Spleen (tissue), 13 donors: ENCODE measurements at regions of chrX and their contacts with region 1.

Region 1: DNA sequence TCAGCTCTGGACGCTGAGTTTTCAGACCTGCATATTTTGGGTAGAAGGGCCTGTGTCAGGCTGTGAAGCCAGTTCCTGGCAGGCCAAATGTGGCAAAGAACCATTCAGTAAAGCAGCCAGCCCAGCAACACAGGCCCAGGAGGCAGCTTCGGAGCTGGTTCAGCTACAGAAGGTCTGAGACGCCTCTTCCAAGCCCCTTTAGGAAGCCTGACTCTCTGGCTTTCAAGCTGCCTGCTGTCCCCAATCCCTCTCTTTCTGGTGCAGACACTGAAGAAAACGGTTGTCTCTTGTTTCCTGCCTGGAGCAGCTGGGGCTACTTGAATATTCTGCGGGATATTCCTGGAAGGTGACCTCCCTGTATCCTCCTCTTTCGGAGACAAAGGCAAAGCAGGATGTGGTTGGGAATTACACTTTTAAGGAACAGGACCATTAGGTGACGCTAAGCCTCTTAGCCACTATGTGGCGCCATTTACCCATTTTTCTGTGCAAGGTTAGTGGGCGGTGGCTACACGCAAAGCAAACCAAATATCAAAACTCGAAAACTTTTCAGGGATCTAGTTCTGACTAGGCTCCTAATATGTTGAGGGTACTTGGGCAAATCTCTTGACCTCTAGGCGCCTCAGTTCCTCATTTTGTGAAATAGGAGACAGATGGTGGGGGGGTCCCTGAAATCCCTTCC is 47.2 kb upstream of the LAS1L start:
- DNase-seq: no peak
- H3K4me3 ChIP-seq: no peak overlapping the region
- H3K27ac ChIP-seq: no peak overlapping the region
- H3K4me1 ChIP-seq: peaks cover 0 to 7% (median 3%) of the 10 kb centered on the region in 6 donors
- H3K27me3 ChIP-seq: peaks cover 0 to 13% (median 0%) of the 10 kb centered on the region in 7 donors
- CTCF ChIP-seq: peak; percentile 62 to 89 (median 78)
- POLR2A ChIP-seq: no peak

Region 2: DNA sequence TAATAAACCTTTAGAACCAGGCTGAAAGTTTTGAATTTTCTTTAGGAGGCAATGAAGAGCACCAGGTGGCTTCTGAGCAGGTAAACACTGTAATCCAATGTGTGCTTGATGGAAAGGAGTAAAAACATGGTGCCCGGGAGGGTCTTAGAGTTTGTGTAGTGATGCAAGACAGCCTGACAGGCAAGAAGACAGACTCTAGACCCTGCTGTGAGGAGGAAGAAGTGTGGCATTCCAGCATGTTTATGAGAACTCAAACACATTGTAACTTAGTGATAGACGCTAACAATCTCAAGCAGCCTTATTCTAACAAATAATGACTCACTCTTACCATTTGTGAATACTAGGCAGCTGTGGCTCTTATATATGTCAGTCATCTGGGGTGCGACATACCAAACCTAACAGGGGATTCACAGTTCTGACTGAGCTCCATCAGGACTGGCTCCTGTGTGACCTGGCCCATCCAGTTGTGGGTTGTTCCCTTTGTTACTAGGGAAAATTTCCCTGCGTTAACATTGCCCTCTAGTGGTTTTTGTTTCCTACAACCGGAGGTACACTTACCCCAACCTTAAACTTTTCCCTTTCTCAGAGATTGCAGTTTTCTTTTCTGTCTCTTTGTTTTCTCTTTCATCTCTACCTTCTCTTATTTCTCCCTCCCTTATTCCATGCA is 404.3 kb after region 1 on chrX:
- intact Hi-C with region 1: loop called (anchors 5 kb)
- DNase-seq: peak; percentile 56
- H3K4me3 ChIP-seq: peak overlapping the region in 1 of 8 donors; percentile 8
- H3K27ac ChIP-seq: peak overlapping the region in 5 of 8 donors; percentile 39 to 80 (median 59)
- H3K4me1 ChIP-seq: peaks cover 0 to 25% (median 9%) of the 10 kb centered on the region in 6 donors
- H3K27me3 ChIP-seq: no peaks in the 10 kb centered on the region
- CTCF ChIP-seq: peak; percentile 27 to 73 (median 67)
- POLR2A ChIP-seq: no peak

Region 3: GRCh38 chrX:66046612-66047235 is 464.9 kb after region 1 on chrX:
- intact Hi-C with region 1: no loop called
- DNase-seq: no peak
- H3K4me3 ChIP-seq: no peak overlapping the region
- H3K27ac ChIP-seq: peak overlapping the region; percentile 16 to 84 (median 63)
- H3K4me1 ChIP-seq: peaks cover 13 to 35% (median 19%) of the 10 kb centered on the region in 6 donors
- H3K27me3 ChIP-seq: no peaks in the 10 kb centered on the region
- CTCF ChIP-seq: no peak
- POLR2A ChIP-seq: no peak

Region 4: GRCh38 chrX:66110112-66110511 is 528.3 kb after region 1 on chrX:
- intact Hi-C with region 1: loop called (anchors 5 kb)
- DNase-seq: no peak
- H3K4me3 ChIP-seq: no peak overlapping the region
- H3K27ac ChIP-seq: no peak overlapping the region
- H3K4me1 ChIP-seq: peaks cover 0 to 5% (median 0%) of the 10 kb centered on the region in 6 donors
- H3K27me3 ChIP-seq: peaks cover 0 to 7% (median 0%) of the 10 kb centered on the region in 7 donors
- CTCF ChIP-seq: peak in 10 of 11 experiments; percentile 28 to 63 (median 56)
- POLR2A ChIP-seq: no peak

Region 5: DNA sequence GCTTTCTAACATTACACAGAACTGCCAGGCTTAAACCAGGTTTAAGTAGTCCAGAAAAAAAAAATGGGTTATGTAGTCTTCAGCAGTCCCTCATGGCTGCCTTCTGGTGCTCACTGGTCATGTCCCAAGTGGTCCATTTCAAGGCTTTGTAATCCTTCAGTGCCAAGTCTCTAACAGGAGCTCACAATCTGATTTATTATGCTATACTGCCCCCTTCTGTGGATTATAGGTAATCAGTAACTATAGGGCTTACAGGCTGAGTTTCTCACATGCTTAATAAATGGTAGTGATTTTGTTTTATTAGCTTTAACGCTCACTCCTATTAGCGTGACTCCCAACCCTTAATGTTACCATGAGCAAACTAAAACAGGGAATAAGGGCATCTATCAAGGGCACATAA is 1149.6 kb after region 1 on chrX:
- intact Hi-C with region 1: loop called (anchors 5 kb)
- DNase-seq: no peak
- H3K4me3 ChIP-seq: no peak overlapping the region
- H3K27ac ChIP-seq: no peak overlapping the region
- H3K4me1 ChIP-seq: peaks cover 0 to 4% (median 0%) of the 10 kb centered on the region in 6 donors
- H3K27me3 ChIP-seq: no peaks in the 10 kb centered on the region
- CTCF ChIP-seq: peak in 5 of 11 experiments; percentile 17 to 35 (median 26)
- POLR2A ChIP-seq: no peak